HepG2 (cell line): ENCODE measurements at regions of chr3 and their contacts with region 1.

Region 1: GRCh38 chr3:50192689-50193141 is 1.3 kb downstream of the GNAT1 start:
- DNase-seq: peak; percentile 54
- ATAC-seq: no peak
- H3K4me3 ChIP-seq: no peak overlapping the region
- H3K27ac ChIP-seq: no peak overlapping the region
- H3K4me1 ChIP-seq: peaks cover 54% of the 10 kb centered on the region
- H3K27me3 ChIP-seq: no peaks in the 10 kb centered on the region
- CTCF ChIP-seq: peak; percentile 91
- EP300 ChIP-seq: no peak
- POLR2A ChIP-seq: no peak
- RAD21 ChIP-seq: peak; percentile 94

Region 2: GRCh38 chr3:50170689-50171088 is 22.0 kb before region 1 on chr3:
- CTCF ChIA-PET with region 1: no interaction called
- POLR2A ChIA-PET with region 1: interaction called, 11 read pairs
- in situ Hi-C with region 1: no loop called
- intact Hi-C with region 1: no loop called
- DNase-seq: peak; percentile 48
- ATAC-seq: no peak
- H3K4me3 ChIP-seq: peak overlapping the region in 1 of 3 experiments; percentile 29; a peak in 1 of 6 replicates
- H3K27ac ChIP-seq: peak overlapping the region; percentile 72
- H3K4me1 ChIP-seq: peaks cover 79% of the 10 kb centered on the region
- H3K27me3 ChIP-seq: no peaks in the 10 kb centered on the region
- CTCF ChIP-seq: no peak
- EP300 ChIP-seq: no peak
- POLR2A ChIP-seq: no peak
- RAD21 ChIP-seq: no peak

Region 3: GRCh38 chr3:50221411-50222168 is 28.9 kb after region 1 on chr3:
- CTCF ChIA-PET with region 1: interaction called, 265 read pairs
- POLR2A ChIA-PET with region 1: interaction called, 625 read pairs
- in situ Hi-C with region 1: loop called (anchors 5 kb)
- intact Hi-C with region 1: loop called (anchors 1 kb)
- DNase-seq: peak; percentile 77
- ATAC-seq: peak; percentile 81
- H3K4me3 ChIP-seq: peak overlapping the region in 1 of 3 experiments; percentile 37; a peak in 2 of 6 replicates
- H3K27ac ChIP-seq: peak overlapping the region; percentile 81
- H3K4me1 ChIP-seq: peaks cover 60% of the 10 kb centered on the region
- H3K27me3 ChIP-seq: no peaks in the 10 kb centered on the region
- CTCF ChIP-seq: peak; percentile 93
- EP300 ChIP-seq: 0 out of 4 replicates have a peak, but pooled peaks of 1 of the 2 experiments have one; percentile 20
- POLR2A ChIP-seq: no peak; a peak in 1 of 4 replicates
- RAD21 ChIP-seq: peak; percentile 93

Region 4: GRCh38 chr3:50245831-50246516 is 53.3 kb after region 1 on chr3:
- CTCF ChIA-PET with region 1: interaction called, 11 read pairs
- POLR2A ChIA-PET with region 1: interaction called, 5 read pairs
- in situ Hi-C with region 1: no loop called
- intact Hi-C with region 1: no loop called
- DNase-seq: no peak
- ATAC-seq: peak; percentile 91
- H3K4me3 ChIP-seq: peak overlapping the region; percentile 18 to 67 (median 51); a peak in 5 of 6 replicates
- H3K27ac ChIP-seq: peak overlapping the region; percentile 43
- H3K4me1 ChIP-seq: peaks cover 20% of the 10 kb centered on the region
- H3K27me3 ChIP-seq: no peaks in the 10 kb centered on the region
- CTCF ChIP-seq: peak; percentile 98
- EP300 ChIP-seq: no peak
- POLR2A ChIP-seq: no peak
- RAD21 ChIP-seq: peak; percentile 91

Region 5: DNA sequence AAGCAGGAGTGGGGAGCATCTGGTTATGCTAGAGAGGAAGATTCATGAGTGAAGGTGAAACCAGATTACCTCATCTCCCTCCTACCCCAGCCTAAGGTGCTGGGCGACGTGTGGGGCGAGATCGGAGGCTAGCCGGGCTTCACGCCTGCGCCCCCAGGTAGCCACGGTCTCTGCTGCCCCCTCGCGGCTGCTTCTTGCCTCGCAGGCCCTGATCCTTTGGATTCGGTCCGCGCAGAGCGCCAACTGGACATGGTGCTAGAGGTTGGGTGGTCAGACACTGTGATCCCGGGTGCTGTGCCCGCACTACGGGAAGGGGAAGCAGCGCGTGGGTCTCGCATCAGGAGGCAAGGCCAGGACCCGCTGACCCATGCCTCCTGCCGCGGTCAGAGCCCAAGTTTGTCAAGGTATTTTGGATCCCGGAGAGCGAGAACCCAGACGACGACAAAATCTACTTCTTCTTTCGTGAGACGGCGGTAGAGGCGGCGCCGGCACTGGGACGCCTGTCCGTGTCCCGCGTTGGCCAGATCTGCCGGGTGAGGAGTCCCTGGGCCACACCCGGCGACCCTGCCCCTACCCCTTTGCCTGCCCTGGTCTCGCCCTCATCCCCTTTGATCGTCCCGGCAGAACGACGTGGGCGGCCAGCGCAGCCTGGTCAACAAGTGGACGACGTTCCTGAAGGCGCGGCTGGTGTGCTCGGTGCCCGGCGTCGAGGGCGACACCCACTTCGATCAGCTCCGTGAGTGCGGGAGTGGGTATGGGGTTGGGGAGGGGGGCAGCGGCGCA is 80.4 kb after region 1 on chr3:
- CTCF ChIA-PET with region 1: interaction called, 4 read pairs
- POLR2A ChIA-PET with region 1: interaction called, 39 read pairs
- in situ Hi-C with region 1: loop called (anchors 10 kb)
- intact Hi-C with region 1: loop called (anchors 5 kb)
- DNase-seq: peak; percentile 64
- ATAC-seq: peak; percentile 13
- H3K4me3 ChIP-seq: no peak overlapping the region
- H3K27ac ChIP-seq: peak overlapping the region; percentile 88
- H3K4me1 ChIP-seq: peaks cover 54% of the 10 kb centered on the region
- H3K27me3 ChIP-seq: no peaks in the 10 kb centered on the region; a peak in 1 of 5 replicates
- CTCF ChIP-seq: peak; percentile 99
- EP300 ChIP-seq: 0 out of 4 replicates have a peak, but pooled peaks of 1 of the 2 experiments have one; percentile 26
- POLR2A ChIP-seq: no peak
- RAD21 ChIP-seq: peak; percentile 99

Region 6: GRCh38 chr3:50550079-50550741 is 357.5 kb after region 1 on chr3:
- CTCF ChIA-PET with region 1: no interaction called
- POLR2A ChIA-PET with region 1: no interaction called
- in situ Hi-C with region 1: no loop called
- intact Hi-C with region 1: no loop called
- DNase-seq: peak; percentile 36
- ATAC-seq: peak; percentile 67
- H3K4me3 ChIP-seq: no peak overlapping the region
- H3K27ac ChIP-seq: no peak overlapping the region
- H3K4me1 ChIP-seq: no peaks in the 10 kb centered on the region
- H3K27me3 ChIP-seq: peaks cover 2 to 25% of the 10 kb centered on the region in 2 experiments; a peak in 3 of 5 replicates
- CTCF ChIP-seq: peak; percentile 78
- EP300 ChIP-seq: no peak
- POLR2A ChIP-seq: no peak
- RAD21 ChIP-seq: no peak